Activated B cell treated with CpG ODN at 0.5 μM for 24 hours (primary cell): ENCODE measurements at regions of chr2 and their contacts with region 1.

Region 1: DNA sequence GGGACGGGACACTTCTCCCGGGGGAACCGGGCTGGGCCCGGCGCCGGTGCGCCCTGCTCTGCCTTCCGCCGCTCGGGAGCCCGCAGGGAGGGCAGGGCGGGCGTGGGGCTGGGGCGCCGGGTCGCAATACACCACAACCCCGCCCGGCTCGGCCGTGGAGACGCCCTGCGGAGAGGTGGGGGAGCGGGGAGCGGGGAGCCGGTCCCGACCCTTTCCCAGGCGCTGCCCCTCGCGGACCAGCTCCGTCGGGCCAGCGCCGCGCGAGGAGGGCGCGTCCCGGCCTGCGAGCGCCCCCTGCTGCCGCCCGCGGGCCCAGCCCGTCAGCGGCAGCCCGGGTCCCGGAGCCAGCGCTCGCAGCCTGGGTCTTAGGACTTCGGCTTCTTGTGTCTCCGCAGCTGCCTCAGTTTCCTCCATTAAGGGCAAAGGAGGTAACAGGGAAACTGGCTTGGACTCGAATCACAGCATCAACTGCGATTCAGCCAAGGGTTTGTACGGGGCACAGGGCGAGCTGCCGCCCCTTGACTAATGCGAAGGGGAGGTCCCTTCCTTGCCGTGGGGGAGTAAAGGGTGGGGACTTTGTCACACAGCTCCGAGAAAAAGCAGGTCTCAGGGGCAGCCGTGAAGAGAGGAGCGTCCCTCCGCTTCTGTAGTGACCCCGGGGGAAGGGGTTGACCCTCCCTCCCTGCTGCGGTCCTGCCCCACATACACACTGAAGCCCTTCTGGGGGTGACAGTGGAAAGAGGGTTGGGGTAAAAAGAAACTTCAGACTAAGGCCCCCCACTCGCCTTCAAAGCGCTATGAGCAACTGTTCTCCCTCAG is 717 bp upstream of the ADRA2B start:
- DNase-seq: peak; percentile 82
- ATAC-seq: peak; percentile 79
- H3K4me3 Mint-ChIP-seq: peak overlapping the region; percentile 71
- H3K27ac Mint-ChIP-seq: peak overlapping the region; percentile 41
- H3K4me1 Mint-ChIP-seq: peaks cover 25% of the 10 kb centered on the region
- H3K27me3 Mint-ChIP-seq: peaks cover 22% of the 10 kb centered on the region
- CTCF ChIP-seq: peak; percentile 56

Region 2: GRCh38 chr2:96024336-96025193 is 92.5 kb before region 1 on chr2:
- CTCF ChIA-PET with region 1: interaction called, 4 read pairs
- POLR2A ChIA-PET with region 1: no interaction called
- intact Hi-C with region 1: loop called (anchors 10 kb)
- DNase-seq: no peak
- ATAC-seq: no peak
- H3K4me3 Mint-ChIP-seq: no peak overlapping the region
- H3K27ac Mint-ChIP-seq: no peak overlapping the region
- H3K4me1 Mint-ChIP-seq: no peaks in the 10 kb centered on the region
- H3K27me3 Mint-ChIP-seq: no peaks in the 10 kb centered on the region
- CTCF ChIP-seq: no peak

Region 3: GRCh38 chr2:96065381-96065930 is 51.6 kb before region 1 on chr2:
- CTCF ChIA-PET with region 1: no interaction called
- POLR2A ChIA-PET with region 1: no interaction called
- intact Hi-C with region 1: no loop called
- DNase-seq: no peak
- ATAC-seq: no peak
- H3K4me3 Mint-ChIP-seq: no peak overlapping the region
- H3K27ac Mint-ChIP-seq: no peak overlapping the region
- H3K4me1 Mint-ChIP-seq: no peaks in the 10 kb centered on the region
- H3K27me3 Mint-ChIP-seq: no peaks in the 10 kb centered on the region
- CTCF ChIP-seq: no peak